Mammary epithelial cell (primary cell): ENCODE measurements at regions of chr21 and their contacts with region 1.

Region 1: GRCh38 chr21:15441992-15442391 is 287.8 kb upstream of the USP25 start:
- DNase-seq: no peak
- H3K4me3 ChIP-seq: no peak overlapping the region
- H3K27ac ChIP-seq: no peak overlapping the region
- H3K4me1 ChIP-seq: no peaks in the 10 kb centered on the region
- H3K27me3 ChIP-seq: no peaks in the 10 kb centered on the region
- CTCF ChIP-seq: no peak

Region 2: DNA sequence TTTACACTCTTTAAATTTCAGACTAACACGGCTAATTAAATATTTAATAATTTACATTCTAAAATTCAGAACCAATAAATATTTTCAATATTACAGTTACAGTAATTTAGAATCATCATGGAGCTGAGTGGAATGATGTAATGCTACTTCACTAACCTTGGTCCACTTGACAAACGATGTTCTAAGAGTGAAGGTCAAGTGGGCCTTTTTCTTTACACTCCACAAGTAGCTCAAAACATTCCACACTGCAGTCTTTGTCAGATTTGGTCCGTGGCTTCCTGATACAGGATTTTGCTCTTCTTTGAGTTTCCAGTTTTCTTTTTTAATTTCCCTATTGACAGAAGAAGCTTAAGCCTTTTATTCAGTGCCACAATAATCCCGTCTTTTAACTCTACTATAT is 212.6 kb before region 1 on chr21:
- CTCF ChIA-PET with region 1: interaction called, 11 read pairs
- dilution Hi-C with region 1: no loop called
- in situ Hi-C with region 1: no loop called
- intact Hi-C with region 1: no loop called
- DNase-seq: no peak
- H3K4me3 ChIP-seq: no peak overlapping the region
- H3K27ac ChIP-seq: no peak overlapping the region
- H3K4me1 ChIP-seq: peaks cover 9% of the 10 kb centered on the region
- H3K27me3 ChIP-seq: no peaks in the 10 kb centered on the region
- CTCF ChIP-seq: no peak

Region 3: GRCh38 chr21:16071092-16071491 is 629.1 kb after region 1 on chr21:
- CTCF ChIA-PET with region 1: no interaction called
- dilution Hi-C with region 1: no loop called
- in situ Hi-C with region 1: no loop called
- intact Hi-C with region 1: no loop called
- DNase-seq: no peak
- H3K4me3 ChIP-seq: peak overlapping the region in 1 of 3 experiments; percentile 20
- H3K27ac ChIP-seq: no peak overlapping the region
- H3K4me1 ChIP-seq: no peaks in the 10 kb centered on the region
- H3K27me3 ChIP-seq: no peaks in the 10 kb centered on the region
- CTCF ChIP-seq: no peak